ENCODE measurements at regions of chr4 and their contacts with region 1.

Region 1: GRCh38 chr4:82462415-82462831 is 32.0 kb downstream of the ENOPH1 start:
- H3K4me3 Mint-ChIP-seq: no peak overlapping the region
- H3K27ac Mint-ChIP-seq: no peak overlapping the region
- H3K4me1 Mint-ChIP-seq: peaks cover 12% of the 10 kb centered on the region
- H3K27me3 Mint-ChIP-seq: no peaks in the 10 kb centered on the region

Region 2: DNA sequence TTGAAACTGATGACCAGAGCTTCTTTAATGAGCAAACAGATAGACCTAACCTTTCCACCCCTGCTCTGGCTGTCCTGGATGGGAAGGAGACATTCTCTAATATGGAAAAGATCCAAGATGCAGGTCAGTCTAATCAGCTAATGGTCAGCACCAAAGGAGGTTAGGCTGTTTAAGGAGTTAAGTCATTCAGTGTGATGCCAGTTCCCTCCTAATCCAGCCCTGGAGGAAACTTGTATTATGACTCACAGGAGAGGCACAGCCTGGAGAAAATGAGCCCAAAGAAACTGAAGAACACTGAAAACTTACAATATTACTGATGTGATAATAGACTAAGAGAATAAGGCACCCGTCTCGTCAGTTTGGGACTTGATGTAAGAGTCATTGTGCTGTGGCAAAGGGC is 411.6 kb before region 1 on chr4:
- intact Hi-C with region 1: no loop called
- H3K4me3 Mint-ChIP-seq: no peak overlapping the region
- H3K27ac Mint-ChIP-seq: no peak overlapping the region
- H3K4me1 Mint-ChIP-seq: peaks cover 2% of the 10 kb centered on the region
- H3K27me3 Mint-ChIP-seq: peaks cover 2% of the 10 kb centered on the region

Region 3: DNA sequence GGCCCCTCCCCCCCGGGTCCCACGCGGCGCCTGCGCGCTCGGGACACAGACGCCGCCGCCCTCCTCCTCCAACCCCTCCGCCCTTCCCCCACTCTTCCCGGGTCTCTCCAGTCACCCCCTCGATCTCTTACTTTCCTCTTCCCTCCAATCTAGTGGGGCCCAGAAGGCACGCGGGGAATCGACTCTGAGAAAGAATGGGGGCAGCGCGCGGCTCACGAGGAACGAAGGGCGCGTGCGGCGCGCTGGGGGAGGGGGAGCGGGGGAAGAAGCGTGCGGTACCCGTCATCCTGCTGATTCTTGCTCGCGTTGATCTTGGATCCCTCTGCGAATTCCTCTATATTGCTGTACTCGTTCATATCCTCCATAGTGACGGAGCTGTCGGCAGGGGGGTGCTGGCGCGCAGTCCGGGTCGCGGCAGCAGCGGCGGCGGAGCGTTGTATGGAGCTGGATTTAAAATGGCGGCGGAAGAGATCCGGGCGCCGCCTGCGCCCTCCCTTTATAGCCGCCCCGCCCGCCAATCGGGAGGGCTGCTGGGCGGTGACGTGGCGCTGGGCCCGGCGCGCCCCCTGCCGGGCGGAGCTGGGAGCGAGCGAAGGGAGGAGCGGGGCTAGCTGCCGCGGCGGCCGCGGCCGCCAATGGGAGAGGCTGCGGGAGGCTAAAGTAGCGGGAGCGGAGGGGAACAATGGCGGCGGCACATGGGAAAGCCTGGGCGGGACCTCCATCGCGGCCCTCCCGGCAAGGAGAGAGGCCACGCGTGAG is 33.3 kb before region 1 on chr4:
- intact Hi-C with region 1: no loop called
- H3K4me3 Mint-ChIP-seq: peak overlapping the region; percentile 87
- H3K27ac Mint-ChIP-seq: peak overlapping the region; percentile 93
- H3K4me1 Mint-ChIP-seq: peaks cover 42% of the 10 kb centered on the region
- H3K27me3 Mint-ChIP-seq: no peaks in the 10 kb centered on the region

Region 4: GRCh38 chr4:82447886-82448285 is 14.5 kb before region 1 on chr4:
- intact Hi-C with region 1: no loop called
- H3K4me3 Mint-ChIP-seq: no peak overlapping the region
- H3K27ac Mint-ChIP-seq: peak overlapping the region; percentile 12
- H3K4me1 Mint-ChIP-seq: no peaks in the 10 kb centered on the region
- H3K27me3 Mint-ChIP-seq: no peaks in the 10 kb centered on the region

Region 5: GRCh38 chr4:82481506-82481840 is 19.1 kb after region 1 on chr4:
- intact Hi-C with region 1: no loop called
- H3K4me3 Mint-ChIP-seq: no peak overlapping the region
- H3K27ac Mint-ChIP-seq: no peak overlapping the region
- H3K4me1 Mint-ChIP-seq: no peaks in the 10 kb centered on the region
- H3K27me3 Mint-ChIP-seq: no peaks in the 10 kb centered on the region

Region 6: GRCh38 chr4:82739316-82740179 is 277.1 kb after region 1 on chr4:
- intact Hi-C with region 1: loop called (anchors 1 kb)
- H3K4me3 Mint-ChIP-seq: no peak overlapping the region
- H3K27ac Mint-ChIP-seq: no peak overlapping the region
- H3K4me1 Mint-ChIP-seq: peaks cover 5% of the 10 kb centered on the region
- H3K27me3 Mint-ChIP-seq: no peaks in the 10 kb centered on the region

Region 7: GRCh38 chr4:82823062-82823461 is 360.6 kb after region 1 on chr4:
- intact Hi-C with region 1: loop called (anchors 10 kb)
- H3K4me3 Mint-ChIP-seq: no peak overlapping the region
- H3K27ac Mint-ChIP-seq: no peak overlapping the region
- H3K4me1 Mint-ChIP-seq: no peaks in the 10 kb centered on the region
- H3K27me3 Mint-ChIP-seq: no peaks in the 10 kb centered on the region

Measured in dendritic cell treated with granulocyte-macrophage colony-stimulating factor and Interleukin-4, amounts not matched to agents 40 ng/mL and 50 ng/mL, for 4 days (primary cell).